ENCODE measurements at regions of chr11 and their contacts with region 1.

Region 1: DNA sequence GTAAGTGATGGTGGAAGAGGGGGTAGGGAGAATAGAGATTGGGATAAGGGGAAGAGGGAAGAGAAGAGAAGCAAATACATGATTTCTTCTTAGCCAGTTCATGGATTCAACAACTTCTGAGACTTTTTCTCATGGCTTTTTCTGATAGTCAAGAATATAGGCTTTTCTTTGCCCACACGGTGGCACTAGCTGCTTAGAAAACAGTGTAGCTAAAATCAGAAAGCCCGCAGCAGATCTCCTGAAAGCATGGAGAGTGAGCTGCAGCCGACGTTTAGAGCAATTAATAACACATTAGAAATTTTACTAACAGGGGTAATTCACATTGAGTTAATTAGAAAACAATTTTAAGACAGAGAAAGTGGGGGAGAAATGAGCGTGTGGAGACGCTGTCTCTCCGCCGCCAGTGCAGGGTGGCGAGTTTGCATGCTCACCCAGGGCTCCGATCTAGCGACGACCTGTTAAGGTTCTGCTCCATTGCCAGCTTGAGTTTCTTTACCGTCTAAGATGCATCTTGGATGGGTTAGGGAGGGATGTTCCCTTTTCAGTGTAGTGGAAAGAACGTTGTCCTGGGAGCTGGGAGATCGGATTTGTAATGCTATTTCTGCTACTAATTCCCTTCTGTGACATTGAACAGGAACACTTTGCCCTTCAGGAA is 3.3 kb upstream of the RAG1 start:
- DNase-seq: peak; percentile 38
- ATAC-seq: peak; percentile 61 to 79

Region 2: GRCh38 chr11:36149538-36150242 is 414.8 kb before region 1 on chr11:
- intact Hi-C with region 1: no loop called
- DNase-seq: peak; percentile 53
- ATAC-seq: peak; percentile 65 to 98

Region 3: DNA sequence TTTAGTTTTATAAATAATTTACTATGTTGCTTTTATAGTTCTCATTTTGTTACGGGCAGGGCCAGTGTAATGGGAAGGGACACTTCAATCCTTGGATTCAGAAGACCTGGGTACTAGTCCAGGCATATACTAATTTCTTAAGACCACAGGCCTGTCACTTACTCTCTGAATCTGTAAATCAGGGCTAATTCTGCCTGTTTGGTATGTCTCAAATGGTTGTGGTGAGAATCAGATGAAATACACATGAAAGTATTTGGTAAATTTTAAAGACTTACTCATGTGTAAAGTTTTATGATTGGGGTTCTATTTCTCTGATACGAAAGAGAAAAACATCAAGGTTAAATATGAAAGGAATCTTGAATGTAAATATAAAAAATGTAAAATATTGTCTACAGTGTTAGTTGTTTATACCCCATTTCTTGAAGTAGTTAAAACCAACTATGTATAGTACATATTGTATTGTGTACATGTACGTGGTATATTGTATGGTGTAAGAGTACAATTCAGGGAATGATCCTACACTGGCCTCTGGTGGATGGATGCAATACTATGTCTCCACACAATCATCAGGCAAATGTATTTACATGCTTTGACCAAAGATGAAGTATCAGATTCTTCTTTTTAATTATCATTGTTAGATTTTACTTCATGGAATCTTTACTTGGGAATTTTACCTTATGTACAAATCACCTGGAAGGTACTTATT is 58.1 kb after region 1 on chr11:
- intact Hi-C with region 1: loop called in 1 of 2 experiments (anchors 5 kb)
- DNase-seq: no peak
- ATAC-seq: peak; percentile 44 to 47

Region 4: DNA sequence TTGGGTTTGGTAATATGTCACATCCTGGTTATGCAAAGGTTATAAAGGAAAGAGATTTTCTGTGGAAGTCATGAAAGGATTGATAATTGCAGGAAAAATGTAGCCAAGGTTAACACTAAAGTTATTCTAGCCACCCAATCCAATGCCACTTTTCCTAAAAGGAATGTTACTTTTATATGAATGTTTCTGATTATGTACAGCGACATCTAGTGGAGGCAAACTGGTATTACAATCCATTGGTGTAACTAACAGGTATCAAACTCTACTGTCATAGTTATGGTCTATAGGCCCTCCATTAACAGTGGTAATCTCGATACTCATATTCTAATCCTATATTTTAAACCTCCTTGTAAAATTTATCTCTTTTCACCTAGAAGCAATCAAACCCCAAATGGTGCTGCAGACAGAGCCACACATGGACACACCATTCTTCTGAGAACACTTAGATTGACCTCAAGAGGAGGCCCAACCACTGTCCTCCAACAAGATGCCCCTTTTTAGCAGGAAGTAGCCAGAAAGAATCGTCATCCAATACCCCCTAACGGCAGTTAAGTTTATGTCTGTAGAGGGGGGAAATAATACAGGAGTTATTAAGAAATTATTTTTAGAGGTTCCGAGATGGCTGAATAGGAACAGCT is 108.4 kb after region 1 on chr11:
- intact Hi-C with region 1: loop called (anchors 5 kb)
- DNase-seq: no peak
- ATAC-seq: no peak

Region 5: DNA sequence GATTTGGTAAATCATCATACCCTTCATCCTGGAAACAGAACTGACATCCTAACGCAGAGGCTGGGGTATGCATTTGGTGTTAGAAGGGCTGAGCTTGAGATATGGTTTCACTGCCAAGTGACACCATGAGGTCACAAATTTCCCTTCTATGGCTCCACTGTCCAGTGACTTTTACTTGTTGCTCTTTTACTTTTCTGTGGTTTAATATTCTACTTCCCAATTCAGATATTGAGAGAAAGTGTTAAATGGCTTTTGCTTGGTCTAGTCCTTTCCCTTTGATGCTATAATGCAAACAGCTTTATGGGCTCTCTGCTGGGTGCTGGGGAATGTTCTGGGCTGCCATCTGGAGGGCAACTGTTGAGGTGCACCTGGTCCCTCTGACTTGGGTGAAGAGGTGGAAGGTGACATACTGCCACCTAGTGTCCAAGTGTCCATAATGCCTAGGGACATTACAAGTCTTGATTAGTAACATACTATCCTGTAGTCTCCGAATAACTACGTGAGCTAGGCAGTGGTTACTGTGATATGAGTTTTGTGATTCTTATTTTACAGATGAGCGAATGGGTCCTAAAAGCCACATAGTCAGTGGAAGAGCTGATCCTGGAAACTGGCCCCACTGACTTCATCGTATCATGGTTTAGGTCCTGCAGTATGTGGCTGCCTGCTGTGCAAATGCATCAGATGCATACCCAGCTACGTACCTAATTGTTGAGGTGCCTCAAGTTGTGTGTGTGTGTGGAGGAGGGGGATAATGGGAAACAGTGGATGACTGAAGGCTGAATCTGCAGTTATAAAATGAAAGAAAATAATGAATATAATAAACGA is 182.6 kb after region 1 on chr11:
- intact Hi-C with region 1: loop called (anchors 5 kb)
- DNase-seq: peak; percentile 77
- ATAC-seq: peak; percentile 94 to 97